SK-N-SH (cell line): ENCODE measurements at regions of chr1 and their contacts with region 1.

Region 1: GRCh38 chr1:205248793-205249601 is 21.3 kb downstream of the TMCC2 start:
- DNase-seq: peak; percentile 58
- H3K4me3 ChIP-seq: no peak overlapping the region
- H3K27ac ChIP-seq: peak overlapping the region in 1 of 2 experiments; percentile 40; a peak in 1 of 4 replicates
- H3K4me1 ChIP-seq: peaks cover 7 to 20% of the 10 kb centered on the region in 2 experiments; a peak in 1 of 4 replicates
- H3K27me3 ChIP-seq: no peaks in the 10 kb centered on the region
- CTCF ChIP-seq: no peak
- EP300 ChIP-seq: no peak
- RAD21 ChIP-seq: no peak

Region 2: GRCh38 chr1:205227584-205228006 is 21.4 kb before region 1 on chr1 and contains the start of gene TMCC2:
- CTCF ChIA-PET with region 1: interaction called, 154 read pairs
- POLR2A ChIA-PET with region 1: no interaction called
- DNase-seq: peak; percentile 99
- H3K4me3 ChIP-seq: peak within 1 kb of the TSS; percentile 78 to 81
- H3K27ac ChIP-seq: peak within 1 kb of the TSS in 1 of 2 experiments; percentile 56; a peak in 1 of 4 replicates
- H3K4me1 ChIP-seq: peaks cover 4 to 21% of the 10 kb centered on the region in 2 experiments; a peak in 2 of 4 replicates
- H3K27me3 ChIP-seq: no peaks in the 10 kb centered on the region
- CTCF ChIP-seq: no peak
- EP300 ChIP-seq: no peak
- RAD21 ChIP-seq: peak; percentile 8; the same call in 1 of the 2 replicates
- polyA plus RNA-seq, gene TMCC2: 5.3 and 6.0 TPM in 2 replicates

Region 3: GRCh38 chr1:205616563-205617293 is 367.7 kb after region 1 on chr1:
- CTCF ChIA-PET with region 1: no interaction called
- POLR2A ChIA-PET with region 1: no interaction called
- DNase-seq: no peak
- H3K4me3 ChIP-seq: no peak overlapping the region
- H3K27ac ChIP-seq: no peak overlapping the region
- H3K4me1 ChIP-seq: peaks cover 0 to 3% of the 10 kb centered on the region in 2 experiments; a peak in 2 of 4 replicates
- H3K27me3 ChIP-seq: no peaks in the 10 kb centered on the region
- CTCF ChIP-seq: no peak
- EP300 ChIP-seq: no peak
- RAD21 ChIP-seq: no peak